B cell (primary cell): ENCODE measurements at regions of chr19 and their contacts with region 1.

Region 1: GRCh38 chr19:19320362-19321142 is at the starts of genes MAU2 and SUGP1:
- DNase-seq: peak; percentile 95
- ATAC-seq: peak; percentile 91
- H3K4me3 ChIP-seq: peak within 1 kb of the TSS; percentile 73 to 97 (median 79)
- H3K4me3 Mint-ChIP-seq: peak within 1 kb of the TSS; percentile 96
- H3K27ac ChIP-seq: peak within 1 kb of the TSS; percentile 96
- H3K27ac Mint-ChIP-seq: peak within 1 kb of the TSS; percentile 99
- H3K4me1 ChIP-seq: peaks cover 18 to 31% of the 10 kb centered on the region in 2 donors
- H3K4me1 Mint-ChIP-seq: peaks cover 44% of the 10 kb centered on the region
- H3K27me3 ChIP-seq: no peaks in the 10 kb centered on the region
- H3K27me3 Mint-ChIP-seq: no peaks in the 10 kb centered on the region
- CTCF ChIP-seq: peak; percentile 26
- total RNA-seq, gene MAU2: 199 and 203 TPM in 2 replicates
- total RNA-seq, gene SUGP1: 86.9 and 91.4 TPM in 2 replicates

Region 2: GRCh38 chr19:19361075-19361594 is 40.6 kb after region 1 on chr19:
- CTCF ChIA-PET with region 1: interaction called, 3 read pairs
- POLR2A ChIA-PET with region 1: no interaction called
- intact Hi-C with region 1: loop called (anchors 2 kb)
- DNase-seq: peak; percentile 83
- ATAC-seq: peak; percentile 68
- H3K4me3 ChIP-seq: peak overlapping the region in 4 of 5 experiments; percentile 28 to 59 (median 42)
- H3K4me3 Mint-ChIP-seq: peak overlapping the region; percentile 79
- H3K27ac ChIP-seq: peak overlapping the region; percentile 22 to 40
- H3K27ac Mint-ChIP-seq: peak overlapping the region; percentile 88
- H3K4me1 ChIP-seq: peaks cover 18 to 26% of the 10 kb centered on the region in 2 donors
- H3K4me1 Mint-ChIP-seq: peaks cover 22% of the 10 kb centered on the region
- H3K27me3 ChIP-seq: no peaks in the 10 kb centered on the region
- H3K27me3 Mint-ChIP-seq: no peaks in the 10 kb centered on the region
- CTCF ChIP-seq: peak; percentile 84

Region 3: DNA sequence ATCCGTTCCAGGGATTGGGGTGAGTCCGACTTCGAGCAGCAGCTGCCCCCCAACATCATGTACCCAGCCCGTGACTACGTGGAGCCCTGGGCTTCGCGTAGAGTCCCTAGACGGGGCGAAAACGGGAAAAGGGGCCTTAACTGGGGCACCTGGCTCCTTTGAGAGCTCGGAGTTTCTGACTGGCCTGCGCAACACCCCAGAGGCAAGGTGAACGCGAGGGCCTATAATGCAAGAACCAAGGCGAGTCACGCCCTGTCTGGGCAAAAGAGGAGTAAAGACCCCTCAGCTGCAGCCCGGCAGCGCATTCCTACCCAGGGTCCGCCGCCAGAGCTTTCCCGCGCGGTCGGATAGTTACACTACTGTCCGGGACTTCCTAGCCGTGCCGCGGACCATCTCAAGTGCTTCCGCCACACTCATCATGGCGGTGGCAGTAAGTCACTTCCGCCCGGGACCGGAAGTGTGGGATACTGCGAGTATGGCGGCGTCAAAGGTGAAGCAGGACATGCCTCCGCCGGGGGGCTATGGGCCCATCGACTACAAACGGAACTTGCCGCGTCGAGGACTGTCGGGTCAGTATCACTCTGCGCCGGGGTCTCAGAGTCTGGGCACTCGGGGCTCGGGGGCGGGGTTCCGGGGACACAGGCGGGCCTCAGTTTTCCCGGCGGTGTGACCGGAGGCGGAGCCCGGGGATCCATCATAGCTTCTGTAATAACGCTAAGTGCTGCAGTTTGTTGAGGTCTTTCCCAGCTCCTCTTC is 195.4 kb after region 1 on chr19 and contains the start of gene NDUFA13:
- CTCF ChIA-PET with region 1: no interaction called
- POLR2A ChIA-PET with region 1: interaction called, 10 read pairs
- intact Hi-C with region 1: loop called (anchors 1 kb)
- DNase-seq: peak; percentile 96
- ATAC-seq: peak; percentile 94
- H3K4me3 ChIP-seq: peak within 1 kb of the TSS; percentile 82 to 99 (median 95)
- H3K4me3 Mint-ChIP-seq: peak within 1 kb of the TSS; percentile 93
- H3K27ac ChIP-seq: peak within 1 kb of the TSS; percentile 72 to 81
- H3K27ac Mint-ChIP-seq: peak within 1 kb of the TSS; percentile 92
- H3K4me1 ChIP-seq: peaks cover 12 to 23% of the 10 kb centered on the region in 2 donors
- H3K4me1 Mint-ChIP-seq: peaks cover 27% of the 10 kb centered on the region
- H3K27me3 ChIP-seq: no peaks in the 10 kb centered on the region
- H3K27me3 Mint-ChIP-seq: no peaks in the 10 kb centered on the region
- CTCF ChIP-seq: no peak
- total RNA-seq, gene NDUFA13: 170 and 188 TPM in 2 replicates